Activated T-helper 1 cell treated with anti-CD3 and anti-CD28 coated beads, Interleukin-12 subunit alpha, Interleukin-12 subunit beta, Interleukin-2, Interleukin-4 antibody, amounts not matched to agents 30 ng/mL and 10 ng/mL and 1 ng/mL, durations not matched to agents 14 hours and 24 hours and 36 hours (primary cell): ENCODE measurements at regions of chr11 and their contacts with region 1.

Region 1: DNA sequence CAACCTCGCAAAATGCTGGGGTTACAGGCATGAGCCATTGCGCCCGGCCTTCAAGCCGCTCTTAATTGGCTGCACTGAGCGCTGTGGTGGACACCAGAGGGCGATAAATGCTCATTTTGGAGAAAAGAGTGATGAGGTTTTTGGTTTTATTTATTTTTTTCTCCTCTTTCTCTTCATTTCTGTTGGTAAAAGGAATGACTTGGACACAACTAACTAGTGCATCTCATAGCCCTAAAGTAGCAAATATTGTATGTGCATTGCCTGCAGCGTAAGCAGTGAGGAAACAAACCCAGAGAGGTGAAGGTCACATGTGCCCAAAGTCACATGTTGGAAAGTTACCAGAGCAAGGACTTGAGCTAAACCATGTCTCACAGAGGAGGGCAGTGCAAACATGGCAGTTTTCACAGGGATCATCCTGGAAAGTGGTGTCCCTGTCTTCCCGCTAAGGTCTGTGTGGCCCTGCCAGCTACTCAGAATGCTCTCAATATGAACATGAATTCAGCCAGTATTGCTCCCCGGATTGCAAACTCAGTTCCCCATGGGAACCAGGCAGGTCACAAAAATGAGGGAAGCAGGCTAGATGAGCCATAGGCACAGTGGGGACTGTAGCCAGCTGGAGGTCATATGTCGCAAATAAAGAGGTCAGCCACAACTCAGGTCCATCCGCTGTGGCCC is 8.6 kb upstream of the CD82 start:
- DNase-seq: peak; percentile 42
- H3K4me3 Mint-ChIP-seq: no peak overlapping the region
- H3K27ac Mint-ChIP-seq: peak overlapping the region; percentile 70
- H3K4me1 Mint-ChIP-seq: peaks cover 32% of the 10 kb centered on the region
- H3K27me3 Mint-ChIP-seq: peaks cover 3% of the 10 kb centered on the region

Region 2: DNA sequence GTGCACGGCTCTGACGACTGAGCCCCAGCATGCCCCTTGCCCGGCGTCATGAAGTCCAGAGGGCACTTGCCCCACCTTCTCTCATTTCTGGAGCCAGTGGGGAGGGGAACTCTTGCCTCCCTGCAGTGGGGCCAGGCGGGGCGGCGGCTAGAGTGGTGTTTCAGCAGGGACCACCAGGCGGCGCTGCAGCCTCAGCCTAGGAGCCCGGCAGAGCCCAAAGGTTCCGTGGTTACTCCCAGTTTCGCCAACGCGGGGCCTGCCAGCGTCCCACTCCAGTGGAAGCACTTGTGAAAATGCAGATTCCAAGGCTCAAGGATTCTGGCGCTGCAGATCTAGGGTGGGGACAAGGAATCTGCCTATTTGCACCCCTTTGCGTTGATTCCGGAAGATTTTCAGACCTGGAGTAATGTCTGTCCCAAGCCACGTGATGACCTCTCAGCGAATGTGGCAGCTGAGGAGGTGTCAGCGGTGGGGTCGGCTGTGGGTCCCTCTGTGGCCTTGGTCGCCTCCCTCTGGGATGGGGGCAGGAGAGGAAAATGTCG is 64.3 kb after region 1 on chr11:
- intact Hi-C with region 1: loop called (anchors 1 kb)
- DNase-seq: peak; percentile 35
- H3K4me3 Mint-ChIP-seq: no peak overlapping the region
- H3K27ac Mint-ChIP-seq: no peak overlapping the region
- H3K4me1 Mint-ChIP-seq: peaks cover 36% of the 10 kb centered on the region
- H3K27me3 Mint-ChIP-seq: no peaks in the 10 kb centered on the region

Region 3: DNA sequence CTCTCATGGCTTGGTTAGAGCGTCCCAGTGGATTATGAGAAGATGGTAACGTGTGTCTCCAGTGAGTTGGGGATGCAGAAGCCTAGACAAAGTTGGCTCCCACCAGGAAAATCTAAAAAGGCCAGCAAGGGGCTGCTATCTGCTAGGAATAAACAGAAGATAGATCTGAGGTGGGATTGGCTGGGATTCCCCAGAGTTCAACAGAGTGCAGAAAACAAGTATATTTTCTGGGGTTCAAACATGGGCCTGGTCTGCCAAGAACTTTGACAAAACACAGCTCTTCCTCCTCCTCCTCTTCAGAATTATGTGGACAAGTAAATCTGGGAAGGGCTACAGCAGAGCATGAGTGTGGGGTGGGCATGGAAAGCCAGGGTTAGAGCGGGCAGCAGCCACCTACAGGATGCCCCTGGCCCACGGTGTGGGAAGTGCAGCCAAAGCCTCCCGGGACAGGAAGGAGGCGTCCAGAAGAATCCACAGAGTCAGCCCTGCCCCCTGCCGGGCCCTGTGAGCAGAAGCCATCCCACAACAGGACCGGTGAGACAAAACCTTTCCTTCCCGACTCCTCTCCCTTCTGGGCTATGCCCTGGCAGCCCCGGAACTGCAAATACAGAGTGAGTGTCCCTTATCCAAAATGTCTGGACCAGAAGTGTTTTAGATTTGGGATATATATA is 75.7 kb after region 1 on chr11:
- intact Hi-C with region 1: loop called (anchors 1 kb)
- DNase-seq: no peak
- H3K4me3 Mint-ChIP-seq: no peak overlapping the region
- H3K27ac Mint-ChIP-seq: no peak overlapping the region
- H3K4me1 Mint-ChIP-seq: peaks cover 8% of the 10 kb centered on the region
- H3K27me3 Mint-ChIP-seq: peaks cover 14% of the 10 kb centered on the region

Region 4: GRCh38 chr11:44645827-44646226 is 89.0 kb after region 1 on chr11:
- intact Hi-C with region 1: no loop called
- DNase-seq: no peak
- H3K4me3 Mint-ChIP-seq: no peak overlapping the region
- H3K27ac Mint-ChIP-seq: no peak overlapping the region
- H3K4me1 Mint-ChIP-seq: no peaks in the 10 kb centered on the region
- H3K27me3 Mint-ChIP-seq: peaks cover 62% of the 10 kb centered on the region

Region 5: GRCh38 chr11:44775366-44775984 is 218.6 kb after region 1 on chr11:
- intact Hi-C with region 1: loop called (anchors 1 kb)
- DNase-seq: peak; percentile 4
- H3K4me3 Mint-ChIP-seq: no peak overlapping the region
- H3K27ac Mint-ChIP-seq: no peak overlapping the region
- H3K4me1 Mint-ChIP-seq: no peaks in the 10 kb centered on the region
- H3K27me3 Mint-ChIP-seq: peaks cover 2% of the 10 kb centered on the region

Region 6: DNA sequence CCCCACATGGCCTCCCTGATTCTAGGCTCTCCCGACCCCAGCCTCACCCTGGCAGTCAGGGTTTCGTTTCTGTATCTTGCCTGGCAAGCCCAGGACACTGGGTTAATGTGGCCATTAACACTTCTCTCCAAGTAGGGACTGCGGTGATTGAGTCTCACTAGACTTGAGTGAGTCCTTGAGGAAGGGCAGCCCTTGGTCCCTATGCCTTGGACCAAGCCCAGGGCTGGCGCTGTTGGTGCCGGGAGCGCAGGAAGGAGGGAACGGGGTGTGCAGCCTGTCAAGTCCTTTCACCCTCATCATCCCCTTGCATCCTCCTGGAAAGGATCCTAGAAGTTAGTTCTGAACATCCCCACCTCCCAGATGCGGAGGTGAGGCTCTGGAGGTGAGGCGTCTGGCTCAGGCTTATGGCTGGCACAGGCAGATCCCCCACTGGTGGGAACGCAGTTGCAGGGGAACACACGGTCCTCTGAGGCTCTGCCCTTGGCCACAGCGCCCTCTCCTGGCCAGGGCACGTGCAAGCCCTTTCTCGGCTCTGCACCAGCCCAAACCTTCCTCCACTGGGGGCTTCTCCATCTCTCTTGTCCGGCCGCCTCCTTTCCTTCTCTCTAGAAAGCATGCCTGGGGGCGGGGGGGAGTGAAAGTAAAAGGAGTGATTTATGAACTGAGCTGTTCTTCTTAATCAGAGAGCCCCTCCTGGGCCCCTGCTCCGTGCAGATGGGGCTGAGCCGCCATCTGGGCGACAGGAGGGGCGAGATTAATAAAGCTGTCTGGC is 337.2 kb after region 1 on chr11:
- intact Hi-C with region 1: loop called (anchors 5 kb)
- DNase-seq: peak; percentile 21
- H3K4me3 Mint-ChIP-seq: no peak overlapping the region
- H3K27ac Mint-ChIP-seq: no peak overlapping the region
- H3K4me1 Mint-ChIP-seq: no peaks in the 10 kb centered on the region
- H3K27me3 Mint-ChIP-seq: no peaks in the 10 kb centered on the region

Region 7: DNA sequence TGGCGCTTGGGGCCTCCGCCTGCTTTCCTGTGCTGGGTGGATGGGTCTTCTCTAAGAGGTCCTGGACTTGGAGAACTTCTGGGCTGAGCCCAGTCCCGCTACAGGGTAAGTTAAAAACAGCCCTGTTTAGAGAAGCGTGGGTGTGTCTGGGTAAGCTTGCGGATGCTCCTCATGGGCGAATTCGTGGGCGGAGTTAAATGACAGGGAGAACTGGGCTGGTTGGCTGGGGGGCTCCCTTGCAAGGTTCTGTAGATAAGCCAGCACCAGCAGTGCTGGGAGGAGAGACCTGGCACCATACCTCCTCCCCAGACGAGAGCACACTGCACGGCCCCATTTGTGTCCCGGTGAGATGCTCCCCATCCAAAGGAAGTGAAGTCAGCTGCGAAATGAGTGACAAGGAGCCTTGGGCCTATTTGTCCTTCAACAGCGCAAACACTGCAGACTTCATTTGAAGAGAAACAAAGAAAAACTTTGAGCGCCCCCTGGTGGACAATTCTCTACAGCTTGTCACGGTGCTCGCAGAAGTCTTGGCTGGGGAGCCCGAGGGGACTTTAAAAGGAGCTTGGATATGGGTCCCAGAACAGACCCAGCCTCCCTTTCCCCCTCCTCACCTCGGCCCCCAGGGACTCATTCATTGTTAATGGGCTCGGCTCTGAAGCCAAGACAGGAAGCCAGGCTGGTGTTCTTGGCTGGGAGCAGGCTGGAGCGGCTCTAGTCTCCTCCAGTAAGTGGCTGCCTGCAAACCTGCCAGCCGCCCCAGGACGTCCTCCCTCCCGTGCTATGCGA is 354.4 kb after region 1 on chr11:
- intact Hi-C with region 1: loop called (anchors 1 kb)
- DNase-seq: peak; percentile 70
- H3K4me3 Mint-ChIP-seq: no peak overlapping the region
- H3K27ac Mint-ChIP-seq: no peak overlapping the region
- H3K4me1 Mint-ChIP-seq: no peaks in the 10 kb centered on the region
- H3K27me3 Mint-ChIP-seq: peaks cover 4% of the 10 kb centered on the region